CD8-positive, alpha-beta T cell (primary cell): ENCODE measurements at regions of chr4 and their contacts with region 1.

Region 1: DNA sequence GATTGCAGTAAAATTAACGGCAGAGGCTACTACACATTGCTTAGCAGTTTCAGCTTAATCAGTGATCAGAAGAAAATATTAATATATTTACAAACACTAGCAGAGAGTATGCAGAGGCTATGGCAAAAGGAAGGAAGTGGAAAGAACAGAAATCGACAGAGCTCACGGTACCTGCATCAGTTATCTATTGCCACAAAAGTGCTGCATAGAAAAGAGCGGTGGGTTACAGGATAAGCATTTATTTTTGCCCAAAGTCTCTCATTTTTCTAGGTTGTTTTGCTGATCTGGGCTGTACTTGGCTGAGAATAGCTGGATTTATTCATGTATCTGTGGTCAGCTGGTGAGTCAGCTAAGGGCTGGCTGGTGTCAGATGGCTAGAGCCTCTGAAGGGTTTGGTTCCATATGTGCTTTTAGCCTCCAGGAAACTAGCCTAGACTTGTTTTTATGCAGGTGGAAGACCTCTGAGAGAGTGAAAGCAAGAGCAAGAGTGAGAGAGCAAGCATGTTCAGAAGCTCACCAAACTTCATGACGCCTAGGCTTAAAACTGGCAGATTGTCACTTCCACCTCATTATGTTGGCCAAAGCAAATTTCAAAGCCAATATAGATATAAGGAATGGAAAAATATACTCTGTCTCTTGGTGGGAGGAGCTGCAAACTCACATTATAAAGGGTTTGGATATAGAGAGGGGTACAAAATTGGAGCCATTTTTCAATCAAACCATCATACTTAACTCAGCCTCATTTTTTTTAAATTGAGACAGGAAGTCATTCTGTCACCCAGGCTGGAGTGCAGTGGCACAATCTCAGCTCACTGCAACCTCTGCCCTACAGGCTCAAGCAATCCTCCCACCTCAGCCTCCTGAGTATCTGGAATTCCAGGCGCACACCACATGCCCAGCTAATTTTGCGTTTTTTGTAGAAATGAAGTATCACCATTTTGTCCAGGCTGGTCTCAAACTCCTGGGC is 153.2 kb upstream of the RPL34 start:
- DNase-seq: peak in 6 of 9 experiments; percentile 13 to 58 (median 21)
- ATAC-seq: peak; percentile 82
- H3K4me3 ChIP-seq: peak overlapping the region in 1 of 2 experiments; percentile 30
- H3K4me3 Mint-ChIP-seq: peak overlapping the region; percentile 81
- H3K27ac ChIP-seq: peak overlapping the region; percentile 41 to 45
- H3K27ac Mint-ChIP-seq: peak overlapping the region; percentile 96
- H3K4me1 ChIP-seq: peaks cover 41% of the 10 kb centered on the region
- H3K4me1 Mint-ChIP-seq: peaks cover 44% of the 10 kb centered on the region
- H3K27me3 ChIP-seq: no peaks in the 10 kb centered on the region
- H3K27me3 Mint-ChIP-seq: no peaks in the 10 kb centered on the region
- CTCF ChIP-seq: no peak

Region 2: DNA sequence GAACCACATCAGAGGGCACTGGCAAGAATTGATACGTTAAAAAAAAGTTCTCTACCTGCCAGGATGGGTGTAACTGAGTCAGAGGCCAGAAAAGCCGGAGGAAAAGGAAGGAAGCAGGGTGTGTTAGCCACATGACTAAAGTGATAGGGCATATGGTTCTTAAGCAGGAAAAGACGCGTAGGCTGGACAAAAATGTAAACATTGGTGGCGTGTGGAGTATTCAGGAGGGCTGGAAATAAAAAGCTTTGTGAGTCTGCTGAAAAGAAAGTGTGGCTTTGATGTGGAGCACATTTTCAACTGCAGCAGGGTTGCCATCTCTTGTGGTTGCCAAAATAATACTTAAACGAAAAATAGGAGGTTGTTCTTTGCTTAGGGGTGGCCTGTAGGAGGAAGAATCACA is 33.4 kb before region 1 on chr4:
- CTCF ChIA-PET with region 1: no interaction called
- POLR2A ChIA-PET with region 1: interaction called, 6 read pairs
- intact Hi-C with region 1: loop called (anchors 1 to 5 kb)
- DNase-seq: peak in 8 of 9 experiments; percentile 13 to 75 (median 46)
- ATAC-seq: peak; percentile 78
- H3K4me3 ChIP-seq: peak overlapping the region in 1 of 2 experiments; percentile 23
- H3K4me3 Mint-ChIP-seq: peak overlapping the region; percentile 52
- H3K27ac ChIP-seq: peak overlapping the region; percentile 21 to 47
- H3K27ac Mint-ChIP-seq: peak overlapping the region; percentile 89
- H3K4me1 ChIP-seq: peaks cover 32% of the 10 kb centered on the region
- H3K4me1 Mint-ChIP-seq: peaks cover 53% of the 10 kb centered on the region
- H3K27me3 ChIP-seq: no peaks in the 10 kb centered on the region
- H3K27me3 Mint-ChIP-seq: no peaks in the 10 kb centered on the region
- CTCF ChIP-seq: no peak

Region 3: GRCh38 chr4:108512615-108513505 is 45.6 kb after region 1 on chr4:
- CTCF ChIA-PET with region 1: no interaction called
- POLR2A ChIA-PET with region 1: no interaction called
- intact Hi-C with region 1: loop called in 1 of 2 experiments (anchors 5 kb)
- DNase-seq: peak in 8 of 9 experiments; percentile 18 to 71 (median 54)
- ATAC-seq: peak; percentile 93
- H3K4me3 ChIP-seq: peak overlapping the region in 1 of 2 experiments; percentile 17
- H3K4me3 Mint-ChIP-seq: peak overlapping the region; percentile 82
- H3K27ac ChIP-seq: no peak overlapping the region
- H3K27ac Mint-ChIP-seq: peak overlapping the region; percentile 57
- H3K4me1 ChIP-seq: peaks cover 16% of the 10 kb centered on the region
- H3K4me1 Mint-ChIP-seq: peaks cover 29% of the 10 kb centered on the region
- H3K27me3 ChIP-seq: no peaks in the 10 kb centered on the region
- H3K27me3 Mint-ChIP-seq: no peaks in the 10 kb centered on the region
- CTCF ChIP-seq: peak; percentile 53

Region 4: GRCh38 chr4:108533245-108533844 is 66.1 kb after region 1 on chr4:
- CTCF ChIA-PET with region 1: no interaction called
- POLR2A ChIA-PET with region 1: no interaction called
- intact Hi-C with region 1: loop called in 1 of 2 experiments (anchors 2 kb)
- DNase-seq: no peak
- ATAC-seq: no peak
- H3K4me3 ChIP-seq: no peak overlapping the region
- H3K4me3 Mint-ChIP-seq: peak overlapping the region; percentile 38
- H3K27ac ChIP-seq: no peak overlapping the region
- H3K27ac Mint-ChIP-seq: peak overlapping the region; percentile 27
- H3K4me1 ChIP-seq: peaks cover 79% of the 10 kb centered on the region
- H3K4me1 Mint-ChIP-seq: peaks cover 78% of the 10 kb centered on the region
- H3K27me3 ChIP-seq: no peaks in the 10 kb centered on the region
- H3K27me3 Mint-ChIP-seq: no peaks in the 10 kb centered on the region
- CTCF ChIP-seq: no peak